Heart left ventricle (tissue), 16 donors: ENCODE measurements at regions of chr2 and their contacts with region 1.

Region 1: GRCh38 chr2:128736689-128737545 is 418.2 kb upstream of the HS6ST1 start:
- DNase-seq: peak; percentile 69 to 89 (median 76)
- ATAC-seq: peak; percentile 70 to 81 (median 74)
- H3K4me3 ChIP-seq: peak overlapping the region in 10 of 12 donors; percentile 6 to 53 (median 41)
- H3K27ac ChIP-seq: no peak overlapping the region
- H3K4me1 ChIP-seq: peaks cover 0 to 35% (median 20%) of the 10 kb centered on the region in 12 donors
- H3K27me3 ChIP-seq: no peaks in the 10 kb centered on the region
- CTCF ChIP-seq: peak; percentile 97 to 100 (median 99)
- POLR2A ChIP-seq: no peak

Region 2: GRCh38 chr2:127576433-127577207 is 1160.3 kb before region 1 on chr2:
- intact Hi-C with region 1: no loop called
- DNase-seq: peak; percentile 77 to 90 (median 87)
- ATAC-seq: peak; percentile 91 to 97 (median 96)
- H3K4me3 ChIP-seq: no peak overlapping the region
- H3K27ac ChIP-seq: peak overlapping the region in 6 of 12 donors; percentile 2 to 50 (median 44)
- H3K4me1 ChIP-seq: peaks cover 0 to 15% (median 11%) of the 10 kb centered on the region in 12 donors
- H3K27me3 ChIP-seq: no peaks in the 10 kb centered on the region
- CTCF ChIP-seq: no peak
- POLR2A ChIP-seq: no peak

Region 3: DNA sequence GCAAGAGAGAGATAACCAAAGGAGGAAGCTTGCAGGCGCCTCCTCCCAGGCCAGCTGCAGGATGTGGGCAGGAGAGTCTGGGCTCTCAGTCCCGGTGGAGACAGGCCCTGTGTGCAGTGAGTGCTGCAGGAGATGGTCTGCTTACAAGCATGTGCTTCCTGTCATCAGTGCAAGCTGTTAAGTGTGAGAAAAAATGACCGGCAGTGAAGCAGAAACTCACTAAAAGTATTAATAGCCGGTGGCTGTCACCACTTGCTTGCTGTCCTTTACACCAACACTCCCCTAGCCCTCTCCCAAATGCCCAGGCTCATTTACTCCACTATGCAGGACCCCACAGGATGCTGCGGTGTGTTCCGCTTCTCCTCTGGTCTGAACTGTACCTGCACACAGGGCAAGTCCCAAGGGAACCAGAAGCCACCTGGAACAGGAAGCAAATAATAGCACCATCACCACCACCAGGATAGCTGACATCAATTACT is 17.4 kb after region 1 on chr2:
- intact Hi-C with region 1: loop called in 1 of 10 experiments (anchors 2 kb)
- DNase-seq: peak in 4 of 5 donors; percentile 63 to 82 (median 74)
- ATAC-seq: peak; percentile 78 to 91 (median 86)
- H3K4me3 ChIP-seq: no peak overlapping the region
- H3K27ac ChIP-seq: peak overlapping the region in 2 of 12 donors; percentile 39 to 58
- H3K4me1 ChIP-seq: peaks cover 0 to 36% (median 22%) of the 10 kb centered on the region in 12 donors
- H3K27me3 ChIP-seq: peaks cover 0 to 8% (median 0%) of the 10 kb centered on the region in 9 donors
- CTCF ChIP-seq: no peak
- POLR2A ChIP-seq: no peak

Region 4: DNA sequence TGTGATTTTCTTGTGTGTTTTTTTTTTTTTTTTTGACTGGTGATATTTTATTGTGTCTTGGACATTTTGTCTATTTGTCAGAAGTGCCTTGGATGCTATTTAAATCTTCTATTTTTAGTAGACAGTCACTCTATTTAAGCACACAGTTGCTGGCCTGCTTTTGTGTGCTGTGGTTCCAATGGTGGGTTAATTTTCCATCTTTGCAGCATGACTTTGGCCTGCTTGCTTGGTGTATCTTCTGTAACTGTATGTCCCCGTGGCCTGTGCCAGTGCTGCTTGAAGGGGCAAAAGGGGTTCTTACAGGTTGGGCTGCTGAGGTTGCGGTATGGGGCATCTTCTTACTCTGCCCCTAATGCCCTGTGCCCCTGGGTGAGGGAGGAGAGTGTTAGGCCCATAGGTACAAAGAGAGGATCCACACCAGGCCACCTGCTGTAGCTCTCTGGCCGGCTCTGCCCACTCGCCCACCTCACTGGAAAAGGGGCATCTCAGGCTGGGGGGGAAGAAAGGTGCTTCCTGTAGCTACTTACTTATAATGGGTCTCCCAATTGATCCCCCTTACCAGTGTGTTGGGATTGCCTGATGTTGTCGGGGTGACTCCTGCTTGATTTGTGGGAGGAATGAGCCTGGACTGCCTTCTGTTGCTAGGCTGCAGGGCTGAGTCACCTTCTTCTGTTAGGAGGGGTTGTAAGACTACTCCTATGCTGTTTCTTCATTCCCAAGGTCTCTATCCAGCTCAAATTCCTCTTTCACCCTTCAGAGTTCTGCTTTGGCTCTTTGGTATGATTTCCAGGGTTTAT is 71.7 kb after region 1 on chr2:
- intact Hi-C with region 1: no loop called
- DNase-seq: no peak
- ATAC-seq: peak; percentile 42 to 85 (median 72)
- H3K4me3 ChIP-seq: no peak overlapping the region
- H3K27ac ChIP-seq: no peak overlapping the region
- H3K4me1 ChIP-seq: peaks cover 0 to 8% (median 0%) of the 10 kb centered on the region in 12 donors
- H3K27me3 ChIP-seq: peaks cover 0 to 11% (median 0%) of the 10 kb centered on the region in 9 donors
- CTCF ChIP-seq: no peak
- POLR2A ChIP-seq: no peak

Region 5: DNA sequence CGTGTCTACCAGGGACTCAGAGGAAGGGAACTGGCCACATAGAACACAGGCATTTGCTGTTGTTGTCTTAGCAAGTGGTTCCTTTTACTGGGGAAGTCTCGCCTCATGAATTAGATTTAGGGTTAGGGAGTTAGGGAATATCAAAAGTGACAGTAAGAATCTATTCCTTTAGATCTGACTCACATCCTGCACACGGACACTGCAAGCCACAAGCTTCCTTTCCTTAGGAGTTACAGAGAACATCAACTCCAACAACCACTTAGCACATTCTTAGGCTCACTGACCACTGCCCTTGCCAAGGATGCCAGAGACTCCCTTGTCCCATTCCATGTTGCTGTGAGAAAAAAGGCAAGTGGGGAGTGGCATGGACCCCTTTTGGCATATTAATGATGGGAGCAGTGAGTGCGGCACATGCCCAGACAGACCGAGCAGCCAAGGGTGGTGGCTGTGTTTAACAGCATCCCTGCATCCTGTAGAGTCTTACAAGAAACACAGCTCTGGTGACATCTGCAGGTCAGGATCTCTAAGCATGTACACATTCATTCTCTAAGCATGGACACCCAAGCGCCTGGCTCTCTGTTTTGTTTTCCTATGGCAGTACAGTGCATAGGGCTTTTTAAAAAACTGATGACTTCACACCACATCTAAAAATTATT is 497.0 kb after region 1 on chr2:
- intact Hi-C with region 1: loop called in 2 of 10 experiments (anchors 10 kb)
- DNase-seq: no peak
- ATAC-seq: peak; percentile 15 to 79 (median 52)
- H3K4me3 ChIP-seq: no peak overlapping the region
- H3K27ac ChIP-seq: no peak overlapping the region
- H3K4me1 ChIP-seq: no peaks in the 10 kb centered on the region
- H3K27me3 ChIP-seq: no peaks in the 10 kb centered on the region
- CTCF ChIP-seq: peak in 2 of 12 donors; percentile 20 to 26
- POLR2A ChIP-seq: no peak

Region 6: GRCh38 chr2:129396980-129397599 is 660.2 kb after region 1 on chr2:
- intact Hi-C with region 1: loop called in 7 of 10 experiments (anchors 5 to 10 kb)
- DNase-seq: peak in 2 of 5 donors; percentile 31 to 40
- ATAC-seq: peak in 3 of 4 donors; percentile 52 to 70 (median 59)
- H3K4me3 ChIP-seq: no peak overlapping the region
- H3K27ac ChIP-seq: no peak overlapping the region
- H3K4me1 ChIP-seq: peaks cover 0 to 3% (median 0%) of the 10 kb centered on the region in 12 donors
- H3K27me3 ChIP-seq: no peaks in the 10 kb centered on the region
- CTCF ChIP-seq: peak; percentile 39 to 65 (median 54)
- POLR2A ChIP-seq: no peak

Region 7: GRCh38 chr2:129849559-129850160 is 1112.7 kb after region 1 on chr2:
- intact Hi-C with region 1: loop called in 3 of 10 experiments (anchors 2 to 10 kb)
- DNase-seq: no peak
- ATAC-seq: peak in 3 of 4 donors; percentile 44 to 67 (median 58)
- H3K4me3 ChIP-seq: no peak overlapping the region
- H3K27ac ChIP-seq: no peak overlapping the region
- H3K4me1 ChIP-seq: no peaks in the 10 kb centered on the region
- H3K27me3 ChIP-seq: no peaks in the 10 kb centered on the region
- CTCF ChIP-seq: peak; percentile 63 to 84 (median 74)
- POLR2A ChIP-seq: no peak

Region 8: GRCh38 chr2:129923265-129924091 is 1186.6 kb after region 1 on chr2:
- intact Hi-C with region 1: loop called in 1 of 10 experiments (anchors 2 kb)
- DNase-seq: no peak
- ATAC-seq: peak; percentile 54 to 74 (median 64)
- H3K4me3 ChIP-seq: no peak overlapping the region
- H3K27ac ChIP-seq: no peak overlapping the region
- H3K4me1 ChIP-seq: peaks cover 0 to 11% (median 3%) of the 10 kb centered on the region in 12 donors
- H3K27me3 ChIP-seq: peaks cover 4 to 39% (median 15%) of the 10 kb centered on the region in 9 donors
- CTCF ChIP-seq: peak; percentile 22 to 59 (median 48)
- POLR2A ChIP-seq: no peak